Heart left ventricle (tissue), 16 donors: ENCODE measurements at regions of chr9 and their contacts with region 1.

Region 1: DNA sequence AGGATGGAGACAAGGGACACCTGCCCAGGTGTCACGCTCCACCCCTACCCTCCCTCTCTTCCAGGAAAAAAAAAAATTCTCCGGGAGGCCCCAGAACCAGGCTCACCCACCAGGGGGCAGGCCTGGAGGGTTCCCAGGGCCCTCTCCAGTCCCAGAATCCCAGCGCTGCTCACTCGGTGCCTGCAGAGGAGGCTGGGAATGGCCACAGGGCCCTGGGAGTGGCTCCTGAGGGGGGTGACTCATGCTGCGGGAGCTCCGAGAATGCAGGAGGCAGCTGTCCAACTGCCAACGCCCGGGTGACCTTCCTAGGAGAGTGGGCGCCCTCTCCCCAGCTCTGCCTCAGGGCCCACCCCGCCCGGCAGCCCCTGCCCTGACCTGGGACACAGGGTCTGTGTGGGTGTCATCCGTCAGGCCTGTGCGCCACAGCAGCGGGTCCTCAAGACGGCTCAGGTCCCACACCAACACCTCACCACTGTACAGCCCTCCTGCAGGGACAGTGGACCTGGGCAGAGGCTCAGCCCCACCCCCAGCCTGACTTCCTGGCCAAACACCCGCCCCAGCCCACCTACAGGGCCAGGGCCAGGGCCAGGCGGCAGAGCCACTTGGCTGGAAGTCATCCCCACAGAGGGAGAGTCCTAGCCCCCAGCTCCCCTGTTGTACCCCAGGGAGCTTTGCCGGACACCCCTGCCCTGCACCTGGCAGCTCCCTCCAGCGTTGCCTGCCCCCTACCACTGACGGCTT is 21.2 kb downstream of the DYNC2I2 start:
- DNase-seq: peak; percentile 86 to 96 (median 92)
- ATAC-seq: peak; percentile 92 to 93 (median 92)
- H3K4me3 ChIP-seq: peak overlapping the region; percentile 10 to 54 (median 37)
- H3K27ac ChIP-seq: peak overlapping the region; percentile 83 to 100 (median 92)
- H3K4me1 ChIP-seq: peaks cover 0 to 35% (median 20%) of the 10 kb centered on the region in 12 donors
- H3K27me3 ChIP-seq: no peaks in the 10 kb centered on the region
- CTCF ChIP-seq: peak; percentile 55 to 85 (median 73)
- POLR2A ChIP-seq: no peak

Region 2: DNA sequence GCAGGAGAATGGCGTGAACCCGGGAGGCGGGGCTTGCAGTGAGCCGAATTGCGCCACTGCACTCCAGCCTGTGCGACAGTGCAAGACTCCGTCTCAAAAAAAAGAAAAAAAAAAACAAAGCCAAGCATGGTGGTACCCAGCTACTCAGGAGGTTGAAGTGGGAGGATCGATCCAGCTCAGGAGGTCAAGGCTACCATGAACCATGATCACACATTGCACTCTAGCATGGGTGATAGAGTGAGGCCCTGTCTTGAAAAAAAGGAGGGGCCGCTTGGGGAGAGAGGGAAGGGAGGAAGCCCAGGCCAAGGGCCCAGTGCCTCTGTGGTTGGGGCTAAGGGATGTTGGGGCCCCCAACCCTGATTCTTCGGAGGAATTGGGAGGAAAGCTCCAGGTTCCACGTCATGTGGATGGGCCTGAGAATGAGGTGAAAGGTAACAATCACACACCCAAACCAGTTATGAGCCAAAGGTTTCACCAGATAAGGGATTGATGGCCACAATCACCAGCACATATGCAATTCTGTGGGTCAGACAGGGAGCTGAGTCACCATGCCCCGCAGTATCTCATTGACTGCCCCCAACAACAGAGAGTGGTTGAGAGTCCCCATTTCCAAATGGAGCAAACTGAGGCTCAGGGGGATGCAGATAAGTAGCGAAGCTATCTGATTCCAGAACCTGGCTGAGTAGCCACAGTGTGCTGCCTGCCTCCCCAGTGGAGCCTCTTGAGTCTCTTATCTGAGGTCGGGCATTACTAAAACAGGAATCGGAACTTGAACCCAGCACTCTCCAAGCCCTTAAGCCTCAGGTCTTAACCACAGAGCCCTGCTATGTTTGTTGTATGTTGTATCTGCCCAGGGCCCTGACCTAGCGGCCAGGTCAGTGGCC is 338.9 kb before region 1 on chr9:
- intact Hi-C with region 1: loop called in 1 of 10 experiments (anchors 10 kb)
- DNase-seq: no peak
- ATAC-seq: no peak
- H3K4me3 ChIP-seq: no peak overlapping the region
- H3K27ac ChIP-seq: no peak overlapping the region
- H3K4me1 ChIP-seq: peaks cover 0 to 6% (median 0%) of the 10 kb centered on the region in 12 donors
- H3K27me3 ChIP-seq: no peaks in the 10 kb centered on the region
- CTCF ChIP-seq: no peak
- POLR2A ChIP-seq: no peak

Region 3: DNA sequence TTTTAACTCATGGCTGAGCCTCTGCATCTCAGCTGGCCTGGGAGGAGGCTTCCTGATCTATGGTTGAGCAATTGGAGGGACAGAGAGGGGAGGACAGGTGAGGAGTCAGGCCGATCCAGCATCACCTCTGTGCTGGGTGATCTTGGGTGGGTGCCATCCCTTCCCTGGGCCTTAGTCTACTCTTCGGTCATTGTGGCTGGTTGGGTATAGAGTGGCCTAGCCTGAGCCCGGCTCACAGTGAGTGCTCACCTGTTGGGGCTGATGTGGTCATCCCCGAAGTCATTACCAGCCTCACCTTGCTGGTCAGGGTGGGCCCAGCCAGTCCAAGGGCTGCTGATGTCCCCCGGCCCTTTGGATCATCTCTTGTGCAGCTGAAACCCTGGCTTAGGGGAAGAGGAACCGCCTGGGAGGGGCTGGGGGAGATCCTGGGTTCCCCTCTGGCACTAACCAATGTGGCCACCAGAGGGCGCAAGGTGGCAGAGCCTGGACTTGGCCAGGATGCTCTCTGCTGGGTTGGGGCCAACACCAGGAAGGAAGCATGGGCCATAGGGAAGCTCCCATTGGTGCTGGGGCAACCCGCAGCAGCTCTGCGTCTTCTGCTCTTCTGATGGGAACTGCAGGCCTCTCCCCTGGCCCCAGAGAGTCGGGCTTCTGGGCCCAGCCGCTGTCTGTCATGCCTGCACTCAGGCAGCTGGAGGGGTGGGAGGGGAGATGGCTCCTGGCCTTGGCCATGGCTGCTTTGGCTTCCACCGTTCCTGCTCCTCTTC is 196.9 kb before region 1 on chr9:
- intact Hi-C with region 1: loop called in 1 of 10 experiments (anchors 5 kb)
- DNase-seq: peak; percentile 86 to 93 (median 88)
- ATAC-seq: peak; percentile 82 to 95 (median 92)
- H3K4me3 ChIP-seq: no peak overlapping the region
- H3K27ac ChIP-seq: peak overlapping the region in 1 of 12 donors; percentile 15
- H3K4me1 ChIP-seq: peaks cover 0 to 10% (median 8%) of the 10 kb centered on the region in 12 donors
- H3K27me3 ChIP-seq: no peaks in the 10 kb centered on the region
- CTCF ChIP-seq: peak; percentile 88 to 99 (median 96)
- POLR2A ChIP-seq: no peak

Region 4: GRCh38 chr9:128455849-128456612 is 179.4 kb before region 1 on chr9 and contains the start of gene ODF2:
- intact Hi-C with region 1: loop called in 1 of 10 experiments (anchors 5 kb)
- DNase-seq: peak; percentile 98 to 99 (median 99)
- ATAC-seq: peak; percentile 90 to 97 (median 94)
- H3K4me3 ChIP-seq: peak within 1 kb of the TSS; percentile 61 to 96 (median 86)
- H3K27ac ChIP-seq: peak within 1 kb of the TSS; percentile 71 to 92 (median 87)
- H3K4me1 ChIP-seq: peaks cover 0 to 26% (median 11%) of the 10 kb centered on the region in 12 donors
- H3K27me3 ChIP-seq: no peaks in the 10 kb centered on the region
- CTCF ChIP-seq: no peak
- POLR2A ChIP-seq: peak in 1 of 2 donors; percentile 48
- total RNA-seq, gene ODF2: 10.9 to 20.9 (median 13.7) TPM

Region 5: DNA sequence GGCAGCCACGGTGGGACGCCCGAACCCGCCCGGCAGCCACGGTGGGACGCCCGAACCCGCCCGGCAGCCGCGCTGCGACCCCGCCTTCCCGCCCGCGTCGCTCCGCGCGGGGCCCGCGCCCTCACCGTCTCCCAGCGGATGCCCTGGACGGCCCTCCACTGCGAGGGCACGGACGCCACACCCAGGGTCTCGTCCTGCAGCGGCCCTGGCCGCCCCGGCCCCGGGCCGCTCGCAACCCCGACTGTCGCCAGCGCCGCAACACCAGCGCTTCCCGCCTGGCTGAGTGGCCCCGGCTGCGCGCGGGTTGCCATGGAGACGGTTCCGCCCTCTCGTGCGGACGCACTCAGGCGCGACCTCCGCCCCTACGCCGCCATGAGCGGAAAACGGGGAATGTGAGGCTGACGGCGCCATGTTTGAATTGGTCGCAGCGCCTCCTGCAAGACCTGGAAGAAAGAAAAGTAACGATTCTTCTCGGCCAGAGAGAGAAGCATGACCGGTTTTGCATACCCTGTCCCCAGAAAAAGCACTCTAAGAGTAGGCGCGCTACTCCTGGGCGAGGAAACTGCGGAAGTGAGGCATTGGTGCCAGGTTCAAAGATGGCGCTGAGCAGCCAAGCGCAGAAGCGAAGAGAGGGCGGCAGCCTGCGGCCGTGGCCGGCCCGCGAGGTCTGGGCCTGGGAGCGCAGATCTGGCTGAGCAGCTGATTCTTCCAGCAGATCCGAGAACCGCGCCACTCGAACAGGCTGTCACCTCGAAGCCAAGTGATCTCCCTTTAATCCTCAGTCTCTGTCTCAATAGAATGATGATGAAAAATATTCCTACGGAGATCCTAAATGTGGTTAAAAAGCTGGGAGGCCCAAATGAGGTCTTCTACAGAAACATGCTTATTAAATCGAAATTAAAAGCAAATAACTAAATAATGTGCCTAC is 21.2 kb after region 1 on chr9 and contains the start of gene DYNC2I2:
- intact Hi-C with region 1: loop called in 1 of 10 experiments (anchors 2 kb)
- DNase-seq: peak; percentile 97 to 99 (median 98)
- ATAC-seq: peak; percentile 98 to 100 (median 100)
- H3K4me3 ChIP-seq: peak within 1 kb of the TSS; percentile 54 to 97 (median 68)
- H3K27ac ChIP-seq: peak within 1 kb of the TSS; percentile 93 to 100 (median 98)
- H3K4me1 ChIP-seq: peaks cover 0 to 11% (median 6%) of the 10 kb centered on the region in 12 donors
- H3K27me3 ChIP-seq: no peaks in the 10 kb centered on the region
- CTCF ChIP-seq: peak in 1 of 12 donors; percentile 17
- POLR2A ChIP-seq: peak in 1 of 2 donors; percentile 66
- total RNA-seq, gene DYNC2I2: 20.5 to 50.2 (median 27.0) TPM

Region 6: DNA sequence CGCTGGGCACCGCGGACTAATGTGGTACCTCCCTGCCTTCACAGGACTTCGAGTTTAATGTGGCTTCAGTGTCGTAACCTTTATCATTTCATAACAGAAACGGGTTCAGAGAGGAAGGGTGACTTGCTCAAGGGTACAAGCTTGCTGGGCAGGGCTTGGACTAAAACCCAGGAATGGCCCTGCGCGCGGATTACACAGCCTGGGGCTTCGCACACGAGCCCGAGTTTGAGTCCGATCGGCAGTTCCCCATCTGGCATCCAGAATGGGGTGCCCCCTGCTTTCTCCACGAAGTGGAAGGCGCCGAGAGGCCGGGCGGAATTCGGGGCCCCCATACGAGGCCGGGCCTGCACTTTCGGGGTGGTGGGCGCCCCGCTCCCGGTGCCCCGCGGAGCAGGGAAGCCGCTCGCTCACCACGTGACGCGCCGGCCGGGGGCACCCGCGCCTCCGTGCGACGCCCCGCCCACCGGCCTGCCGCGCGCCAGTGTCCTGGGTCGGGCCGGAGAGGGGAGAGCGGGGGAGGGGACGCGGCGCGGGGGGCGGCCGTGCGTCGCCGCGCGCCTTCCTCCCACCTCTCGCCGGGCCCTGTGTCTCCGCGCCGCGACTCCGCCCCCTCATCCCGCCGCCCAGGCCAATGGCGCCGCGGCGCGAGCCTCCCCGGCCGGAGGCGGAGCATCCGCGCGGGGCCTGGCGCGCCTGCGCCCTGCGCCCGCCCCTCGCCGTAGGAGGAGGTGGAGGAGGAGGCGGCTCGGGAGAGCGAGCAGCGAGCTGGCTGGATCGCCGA is 53.2 kb after region 1 on chr9 and contains the start of gene SET:
- intact Hi-C with region 1: loop called in 4 of 10 experiments (anchors 5 to 10 kb)
- DNase-seq: peak; percentile 96 to 98 (median 97)
- ATAC-seq: peak; percentile 80 to 96 (median 92)
- H3K4me3 ChIP-seq: peak within 1 kb of the TSS; percentile 68 to 96 (median 78)
- H3K27ac ChIP-seq: peak within 1 kb of the TSS; percentile 91 to 99 (median 96)
- H3K4me1 ChIP-seq: peaks cover 5 to 51% (median 27%) of the 10 kb centered on the region in 12 donors
- H3K27me3 ChIP-seq: no peaks in the 10 kb centered on the region
- CTCF ChIP-seq: no peak
- POLR2A ChIP-seq: peak; percentile 59 to 97
- total RNA-seq, gene SET: 96.8 to 240 (median 211) TPM